ENCODE measurements at regions of chrX and their contacts with region 1.

Region 1: DNA sequence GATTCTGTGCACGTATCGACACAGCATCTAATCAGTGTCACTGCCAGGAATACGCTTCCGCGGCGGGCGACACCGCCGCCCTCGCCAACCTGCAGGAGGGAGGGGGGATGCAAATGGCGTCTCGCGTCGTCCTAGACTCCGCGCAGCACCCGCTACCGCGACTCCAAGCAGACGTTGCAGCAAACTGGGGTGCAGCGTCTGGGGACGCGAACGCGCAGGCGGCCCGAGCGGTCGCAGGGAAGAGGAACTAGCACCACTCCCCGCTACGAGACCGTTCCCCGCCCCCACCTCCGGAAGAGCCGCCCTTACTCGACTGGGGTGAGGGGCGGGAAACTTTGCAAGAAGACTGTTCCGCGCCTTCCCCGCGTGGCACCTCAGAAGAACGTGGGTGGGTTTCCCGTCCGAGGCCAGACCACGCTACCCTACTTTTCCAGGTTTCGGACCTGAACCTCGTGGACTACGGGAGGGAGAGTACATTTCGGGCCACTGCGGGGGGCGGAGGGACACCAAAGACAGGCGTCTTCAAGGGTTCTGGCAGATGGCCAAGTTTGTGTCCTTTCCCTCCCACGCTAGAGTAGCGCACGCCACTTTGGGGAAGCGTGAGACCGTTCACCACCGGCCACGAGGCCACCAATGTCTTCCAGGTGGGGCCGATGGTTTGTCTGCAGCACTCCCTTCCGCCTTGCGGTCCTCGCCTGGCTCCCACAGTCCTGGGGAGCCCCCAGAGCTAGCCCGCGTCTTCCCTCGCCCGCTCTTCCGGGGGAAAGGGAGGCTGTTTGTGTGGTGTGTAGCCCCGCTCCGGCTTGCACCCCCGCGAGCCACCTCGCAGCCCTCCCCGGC is 78.0 kb upstream of the BCOR start:
- DNase-seq: peak; percentile 88 to 89
- ATAC-seq: peak; percentile 65
- H3K4me3 ChIP-seq: peak overlapping the region; percentile 40 to 80
- H3K27ac ChIP-seq: peak overlapping the region; percentile 78 to 93
- H3K4me1 ChIP-seq: no peaks in the 10 kb centered on the region
- H3K27me3 ChIP-seq: no peaks in the 10 kb centered on the region

Region 2: DNA sequence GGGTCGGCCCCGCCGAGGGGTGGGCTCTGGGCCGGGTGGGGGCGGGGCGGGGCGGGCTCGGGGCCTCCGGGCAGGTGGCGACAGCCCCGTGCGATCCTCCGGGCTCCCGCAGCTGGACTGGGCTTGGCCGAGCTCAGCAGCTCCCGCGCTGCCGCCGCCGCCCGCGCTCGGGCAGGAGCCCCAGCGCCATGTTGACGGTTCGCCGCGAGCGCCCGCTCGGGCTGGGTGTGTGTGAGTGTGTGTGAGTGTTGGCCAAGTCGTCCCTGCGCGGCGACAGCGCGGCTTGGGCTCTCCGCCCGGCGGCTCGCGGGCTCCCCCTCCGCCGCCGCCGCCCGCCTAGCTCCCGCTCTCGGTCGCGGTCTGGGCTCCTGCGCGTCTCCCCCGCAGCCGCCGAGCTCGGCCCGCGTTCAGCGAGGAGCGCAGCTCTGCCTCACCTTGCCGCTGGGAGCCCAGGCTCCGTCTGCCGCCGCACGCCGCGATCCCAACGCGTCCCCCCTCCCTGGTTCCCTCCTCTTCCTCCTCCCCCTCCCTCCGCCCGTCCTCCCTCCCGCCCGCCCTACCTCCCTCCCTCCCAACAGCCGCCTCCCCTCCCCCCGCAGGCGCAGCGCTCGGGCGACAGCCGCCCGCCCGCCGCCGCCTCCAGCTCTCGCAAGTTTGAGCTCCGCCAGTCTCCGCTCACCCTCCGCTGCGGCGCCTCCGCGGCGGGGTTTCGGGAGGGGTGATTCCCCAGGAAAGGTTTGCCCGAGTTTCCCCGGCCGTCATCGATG is 78.1 kb before region 1 on chrX and contains the start of gene BCOR:
- intact Hi-C with region 1: loop called in 1 of 2 experiments (anchors 1 kb)
- DNase-seq: peak; percentile 86 to 91
- ATAC-seq: peak; percentile 58
- H3K4me3 ChIP-seq: peak within 1 kb of the TSS; percentile 55 to 86
- H3K27ac ChIP-seq: peak within 1 kb of the TSS; percentile 30 to 87
- H3K4me1 ChIP-seq: no peaks in the 10 kb centered on the region
- H3K27me3 ChIP-seq: peaks cover 0 to 2% of the 10 kb centered on the region in 2 donors
- total RNA-seq, gene BCOR: 22.6 to 46.7 TPM

Region 3: GRCh38 chrX:40266490-40267333 is 91.0 kb after region 1 on chrX:
- intact Hi-C with region 1: loop called in 1 of 2 experiments (anchors 2 kb)
- DNase-seq: peak; percentile 75 to 88
- ATAC-seq: peak; percentile 88
- H3K4me3 ChIP-seq: peak overlapping the region in 1 of 2 donors; percentile 75
- H3K27ac ChIP-seq: peak overlapping the region; percentile 2 to 87
- H3K4me1 ChIP-seq: no peaks in the 10 kb centered on the region
- H3K27me3 ChIP-seq: no peaks in the 10 kb centered on the region